Esophagus squamous epithelium (tissue), 5 donors: ENCODE measurements at regions of chr18 and their contacts with region 1.

Region 1: DNA sequence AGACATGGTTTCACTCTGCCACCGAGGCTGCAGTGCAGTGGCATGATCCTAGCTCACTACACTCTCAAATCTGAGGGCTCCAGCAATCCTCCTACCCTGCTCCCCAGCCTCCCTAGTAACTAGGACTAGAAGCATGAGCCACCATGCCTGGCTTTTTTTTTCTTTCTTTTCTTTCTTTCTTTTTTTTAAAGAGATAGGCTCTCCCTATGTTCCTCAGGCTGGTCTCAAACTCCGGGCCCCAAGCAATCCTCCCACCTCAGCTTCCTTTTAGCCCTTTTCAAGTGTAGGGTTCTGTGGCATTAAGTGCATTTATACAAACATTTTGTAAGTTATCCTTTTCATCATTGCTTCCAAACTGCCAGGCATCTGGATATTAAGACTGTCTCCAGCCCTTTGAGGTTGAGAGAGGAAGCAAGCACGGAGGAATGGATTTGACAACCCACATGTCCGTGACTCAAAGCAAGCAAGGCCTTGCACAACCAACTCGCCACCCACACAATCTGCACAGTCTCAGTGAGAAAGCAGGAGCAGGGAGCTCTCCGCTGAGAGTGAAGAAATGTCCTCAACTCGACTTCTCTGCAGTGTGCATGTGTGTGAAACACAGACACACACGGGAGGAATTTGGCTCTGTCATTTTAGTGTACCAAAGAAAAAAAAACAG is 65.6 kb downstream of the ATP8B1 start:
- DNase-seq: peak; percentile 6
- H3K4me3 ChIP-seq: peak overlapping the region in 1 of 4 donors; percentile 2
- H3K27ac ChIP-seq: peak overlapping the region; percentile 57 to 81 (median 72)
- H3K4me1 ChIP-seq: peaks cover 0 to 31% (median 19%) of the 10 kb centered on the region in 3 donors
- H3K27me3 ChIP-seq: no peaks in the 10 kb centered on the region
- CTCF ChIP-seq: no peak
- POLR2A ChIP-seq: peak in 1 of 4 donors; percentile 30

Region 2: DNA sequence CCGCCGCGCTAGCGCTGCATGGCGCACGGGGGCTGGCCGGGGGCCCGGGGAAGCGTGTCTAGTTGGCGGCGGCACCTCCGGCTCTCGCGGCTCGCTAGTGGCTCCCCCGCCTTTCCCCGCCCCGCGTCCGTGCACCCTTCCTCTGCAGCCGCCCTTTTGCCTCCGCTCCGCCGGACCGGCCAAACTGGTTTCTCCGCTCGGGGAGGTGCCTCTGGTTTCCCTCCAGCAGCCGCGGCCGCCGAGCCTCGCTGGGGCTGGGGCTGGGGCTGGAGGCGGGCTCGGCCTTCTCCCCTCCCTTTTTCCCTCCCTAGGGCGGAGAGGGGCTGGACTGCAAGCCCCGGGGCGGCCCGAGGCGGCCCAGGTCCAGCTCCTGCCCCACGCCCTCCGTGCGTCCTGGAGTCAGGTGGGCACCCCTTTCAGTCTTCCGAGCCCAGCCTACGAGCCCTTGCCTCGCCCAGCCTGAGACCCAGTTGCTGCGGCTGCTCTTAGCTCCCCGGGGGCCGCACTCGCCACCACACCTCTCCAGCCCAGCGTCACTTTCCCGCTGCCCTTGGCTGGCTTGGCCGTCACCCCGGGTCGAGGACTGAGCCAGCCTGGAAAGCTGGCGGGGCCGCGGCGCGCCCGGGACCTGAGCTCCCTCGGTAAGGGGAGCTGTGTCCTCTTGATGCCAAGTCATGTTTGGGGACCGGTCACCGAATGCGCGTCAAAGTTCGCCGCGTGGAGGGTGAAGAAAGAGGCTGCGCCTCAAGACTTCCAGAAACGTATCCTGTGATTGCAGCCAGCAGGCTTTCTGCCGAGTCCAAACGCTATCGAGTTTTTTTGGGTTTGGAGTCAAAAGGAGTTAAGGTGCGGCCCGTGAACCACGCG is 65.8 kb after region 1 on chr18 and contains the start of gene ATP8B1:
- intact Hi-C with region 1: loop called (anchors 10 kb)
- DNase-seq: no peak
- H3K4me3 ChIP-seq: peak within 1 kb of the TSS; percentile 81 to 92 (median 88)
- H3K27ac ChIP-seq: peak within 1 kb of the TSS; percentile 93 to 96 (median 95)
- H3K4me1 ChIP-seq: peaks cover 14 to 80% (median 19%) of the 10 kb centered on the region in 3 donors
- H3K27me3 ChIP-seq: peaks cover 0 to 25% (median 0%) of the 10 kb centered on the region in 4 donors
- CTCF ChIP-seq: peak in 1 of 6 experiments; percentile 9
- POLR2A ChIP-seq: peak in 2 of 4 donors; percentile 68 to 77
- total RNA-seq, gene ATP8B1: 20.2 to 39.1 (median 35.6) TPM